ENCODE measurements at regions of chr1 and their contacts with region 1.

Region 1: GRCh38 chr1:87826681-87827251 is 498.1 kb downstream of the LMO4 start:
- DNase-seq: no peak
- ATAC-seq: no peak
- H3K4me3 ChIP-seq: no peak overlapping the region
- H3K27ac ChIP-seq: no peak overlapping the region
- H3K4me1 ChIP-seq: no peaks in the 10 kb centered on the region
- H3K27me3 ChIP-seq: no peaks in the 10 kb centered on the region
- CTCF ChIP-seq: no peak

Region 2: GRCh38 chr1:87757676-87758075 is 69.1 kb before region 1 on chr1:
- CTCF ChIA-PET with region 1: no interaction called
- POLR2A ChIA-PET with region 1: interaction called, 10 read pairs
- in situ Hi-C with region 1: no loop called
- intact Hi-C with region 1: no loop called
- DNase-seq: no peak
- ATAC-seq: no peak
- H3K4me3 ChIP-seq: no peak overlapping the region
- H3K27ac ChIP-seq: no peak overlapping the region
- H3K4me1 ChIP-seq: no peaks in the 10 kb centered on the region
- H3K27me3 ChIP-seq: no peaks in the 10 kb centered on the region
- CTCF ChIP-seq: no peak

Region 3: DNA sequence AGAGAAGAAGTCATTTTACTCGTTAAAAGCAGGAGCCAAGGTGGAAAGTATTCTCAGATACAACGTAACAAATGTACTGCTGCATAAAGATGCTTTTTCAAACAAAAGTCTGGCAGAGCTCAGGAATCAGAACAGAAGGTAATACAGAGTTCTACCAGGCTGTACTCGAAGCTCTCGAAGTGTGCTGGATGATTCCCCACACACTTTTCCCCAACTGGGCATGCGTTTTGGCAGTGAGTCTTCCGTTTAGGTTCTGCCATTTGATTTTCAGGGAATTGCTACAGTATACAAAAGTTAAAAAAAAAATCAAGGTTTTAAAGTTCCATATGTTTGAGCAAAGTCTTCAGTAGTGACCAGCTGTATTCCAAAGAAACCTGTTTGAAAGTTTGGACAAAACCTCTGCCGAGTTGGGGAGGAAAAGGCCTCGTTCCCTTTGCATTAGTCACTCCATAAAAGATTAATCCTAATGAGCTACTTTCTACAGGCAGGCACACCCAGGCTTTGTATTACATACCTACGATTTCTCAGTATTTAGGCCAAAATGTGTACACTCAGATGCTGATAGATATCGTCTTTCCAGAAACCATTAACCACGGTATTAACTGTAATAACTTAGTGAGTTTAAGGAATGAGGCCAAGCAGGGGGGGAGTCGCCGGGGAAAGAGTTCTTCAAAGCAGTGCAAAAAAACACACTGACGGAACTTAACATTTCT is 20.9 kb before region 1 on chr1:
- CTCF ChIA-PET with region 1: no interaction called
- POLR2A ChIA-PET with region 1: interaction called, 11 read pairs
- in situ Hi-C with region 1: no loop called
- intact Hi-C with region 1: no loop called
- DNase-seq: no peak
- ATAC-seq: no peak
- H3K4me3 ChIP-seq: no peak overlapping the region
- H3K27ac ChIP-seq: no peak overlapping the region
- H3K4me1 ChIP-seq: no peaks in the 10 kb centered on the region
- H3K27me3 ChIP-seq: no peaks in the 10 kb centered on the region
- CTCF ChIP-seq: no peak

Region 4: DNA sequence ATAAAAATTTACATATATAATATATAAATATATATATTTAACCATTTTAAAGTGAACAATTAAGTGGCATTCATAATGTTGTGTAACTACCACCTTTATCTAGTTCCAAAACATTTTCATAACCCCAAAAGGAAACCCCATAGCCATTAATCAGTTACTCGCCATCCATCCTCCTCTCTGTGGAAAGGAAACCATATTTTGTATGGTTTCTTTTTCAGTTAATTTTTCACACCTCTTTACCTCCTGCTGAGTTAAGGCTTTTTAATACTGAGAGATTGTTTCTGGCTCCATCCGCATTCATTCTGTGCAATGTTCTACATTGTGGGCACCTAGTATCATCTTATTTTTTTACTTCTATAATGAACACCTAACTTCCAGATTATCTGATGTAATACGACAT is 14.0 kb after region 1 on chr1:
- CTCF ChIA-PET with region 1: no interaction called
- POLR2A ChIA-PET with region 1: no interaction called
- in situ Hi-C with region 1: no loop called
- intact Hi-C with region 1: no loop called
- DNase-seq: no peak
- ATAC-seq: no peak
- H3K4me3 ChIP-seq: no peak overlapping the region
- H3K27ac ChIP-seq: no peak overlapping the region
- H3K4me1 ChIP-seq: no peaks in the 10 kb centered on the region
- H3K27me3 ChIP-seq: no peaks in the 10 kb centered on the region
- CTCF ChIP-seq: no peak

Measured in Panc1 (cell line).